ENCODE measurements at regions of chr10 and their contacts with region 1.

Region 1: DNA sequence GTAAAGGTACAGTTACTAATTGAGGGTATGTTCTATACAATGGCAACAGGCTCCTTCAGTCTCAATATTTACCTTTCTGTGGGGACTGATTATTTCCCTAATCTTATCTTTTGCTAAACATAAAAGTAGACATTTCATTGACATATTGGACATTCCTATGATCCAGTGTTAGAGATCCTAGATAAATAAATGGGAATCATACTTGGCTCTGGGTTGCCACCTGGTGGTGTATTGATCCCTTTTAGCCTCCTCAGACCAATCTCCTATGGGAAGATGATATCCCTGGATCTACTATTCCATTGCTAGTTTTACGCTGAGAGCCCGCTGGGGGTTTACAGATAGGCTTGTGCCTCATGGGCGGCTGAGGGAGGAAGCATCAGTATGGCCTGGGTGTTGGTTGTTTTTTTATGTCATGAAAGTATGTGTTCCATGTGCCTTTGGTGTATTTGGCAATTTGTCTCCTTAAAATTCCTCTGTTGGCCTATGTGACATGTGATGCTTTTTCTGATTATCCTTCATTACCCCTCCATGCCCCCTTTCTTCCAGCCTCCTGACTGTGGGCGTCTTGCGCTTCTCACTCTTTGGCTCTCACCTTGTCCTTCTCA is 18.8 kb downstream of the CELF2 start:
- DNase-seq: peak in 1 of 2 donors; percentile 43
- ATAC-seq: peak in 7 of 8 donors; percentile 36 to 83 (median 70)
- H3K4me3 ChIP-seq: no peak overlapping the region
- H3K27ac ChIP-seq: peak overlapping the region in 7 of 10 donors; percentile 26 to 76 (median 64)
- H3K4me1 ChIP-seq: peaks cover 6 to 61% (median 46%) of the 10 kb centered on the region in 9 donors
- H3K27me3 ChIP-seq: no peaks in the 10 kb centered on the region
- CTCF ChIP-seq: peak; percentile 33 to 76 (median 67)

Region 2: GRCh38 chr10:10233229-10233628 is 803.3 kb before region 1 on chr10:
- intact Hi-C with region 1: loop called in 2 of 10 experiments (anchors 10 kb)
- DNase-seq: no peak
- ATAC-seq: no peak
- H3K4me3 ChIP-seq: no peak overlapping the region
- H3K27ac ChIP-seq: no peak overlapping the region
- H3K4me1 ChIP-seq: no peaks in the 10 kb centered on the region
- H3K27me3 ChIP-seq: no peaks in the 10 kb centered on the region
- CTCF ChIP-seq: peak in 6 of 9 donors; percentile 33 to 57 (median 45)

Region 3: DNA sequence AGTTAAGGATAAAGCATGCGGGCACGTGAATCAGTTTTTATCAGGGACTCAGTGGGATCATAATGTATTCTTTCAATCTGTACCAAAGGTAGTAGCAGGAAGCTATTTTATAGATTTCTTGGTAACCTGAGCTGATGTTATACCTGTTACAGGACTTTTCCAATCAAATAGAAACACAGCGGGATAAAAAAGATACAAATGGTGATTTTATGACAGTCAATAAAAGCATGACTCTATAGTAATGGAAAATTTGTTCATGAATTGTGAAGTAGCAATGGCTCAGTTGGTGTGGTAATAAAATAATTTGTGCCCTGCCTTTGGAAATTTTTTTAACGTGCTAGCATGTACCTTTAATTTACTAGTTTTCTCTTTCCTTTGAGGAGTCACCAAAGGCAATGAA is 319.5 kb before region 1 on chr10:
- intact Hi-C with region 1: loop called in 1 of 10 experiments (anchors 5 kb)
- DNase-seq: no peak
- ATAC-seq: no peak
- H3K4me3 ChIP-seq: no peak overlapping the region
- H3K27ac ChIP-seq: no peak overlapping the region
- H3K4me1 ChIP-seq: peaks cover 0 to 5% (median 0%) of the 10 kb centered on the region in 9 donors
- H3K27me3 ChIP-seq: no peaks in the 10 kb centered on the region
- CTCF ChIP-seq: no peak

Region 4: DNA sequence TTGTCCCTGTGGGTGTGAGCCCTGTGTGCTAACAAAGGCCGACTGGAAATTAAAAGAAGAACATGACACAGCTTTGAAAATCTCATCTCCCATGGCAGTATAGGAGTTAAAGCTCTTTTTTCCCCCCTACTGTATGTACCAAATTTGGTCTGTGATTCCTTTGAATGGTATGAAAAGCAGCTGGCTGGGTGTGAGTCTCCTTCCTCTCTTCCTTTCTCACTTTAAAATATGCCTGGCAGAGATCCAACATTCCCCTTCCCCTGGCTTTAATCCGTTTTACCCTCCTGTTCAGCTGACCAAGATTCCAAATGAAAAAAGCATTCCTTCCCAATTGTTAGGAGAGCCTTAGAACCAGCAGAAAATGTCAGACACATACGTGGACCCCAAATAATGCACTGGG is 243.8 kb before region 1 on chr10:
- intact Hi-C with region 1: loop called in 1 of 10 experiments (anchors 10 kb)
- DNase-seq: peak in 1 of 2 donors; percentile 29
- ATAC-seq: peak in 4 of 8 donors; percentile 35 to 82 (median 47)
- H3K4me3 ChIP-seq: no peak overlapping the region
- H3K27ac ChIP-seq: peak overlapping the region in 6 of 10 donors; percentile 36 to 71 (median 54)
- H3K4me1 ChIP-seq: peaks cover 0 to 45% (median 32%) of the 10 kb centered on the region in 9 donors
- H3K27me3 ChIP-seq: no peaks in the 10 kb centered on the region
- CTCF ChIP-seq: no peak